ENCODE measurements at regions of chr1 and their contacts with region 1.

Region 1: DNA sequence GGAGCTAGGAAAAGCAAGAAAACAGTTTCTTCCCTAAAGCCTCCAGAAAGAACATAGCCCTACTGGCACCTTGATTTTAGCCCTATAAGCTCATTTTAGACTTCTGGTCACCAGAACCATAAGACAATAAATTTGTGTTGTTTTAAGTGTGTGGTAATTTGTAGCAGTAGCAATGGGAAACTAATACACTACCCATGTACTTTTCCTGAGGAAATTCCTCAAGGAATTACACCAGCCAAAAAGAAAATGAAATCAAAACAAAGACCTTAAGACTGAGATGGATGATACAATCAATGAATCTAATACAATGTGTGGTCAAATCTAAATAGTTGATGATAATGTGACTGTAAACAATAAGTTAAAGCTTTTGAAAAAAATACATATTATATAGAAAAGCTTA is 11.8 kb downstream of the VAMP4 start:
- DNase-seq: no peak
- H3K4me3 ChIP-seq: no peak overlapping the region
- H3K4me3 Mint-ChIP-seq: no peak overlapping the region
- H3K27ac ChIP-seq: no peak overlapping the region
- H3K27ac Mint-ChIP-seq: no peak overlapping the region
- H3K4me1 ChIP-seq: no peaks in the 10 kb centered on the region
- H3K4me1 Mint-ChIP-seq: peaks cover 4% of the 10 kb centered on the region
- H3K27me3 ChIP-seq: no peaks in the 10 kb centered on the region
- H3K27me3 Mint-ChIP-seq: no peaks in the 10 kb centered on the region
- CTCF ChIP-seq: no peak

Region 2: GRCh38 chr1:171715813-171716251 is 14.2 kb before region 1 on chr1:
- intact Hi-C with region 1: no loop called
- DNase-seq: no peak
- H3K4me3 ChIP-seq: no peak overlapping the region
- H3K4me3 Mint-ChIP-seq: no peak overlapping the region
- H3K27ac ChIP-seq: no peak overlapping the region
- H3K27ac Mint-ChIP-seq: peak overlapping the region in 1 of 7 donors; percentile 15
- H3K4me1 ChIP-seq: no peaks in the 10 kb centered on the region
- H3K4me1 Mint-ChIP-seq: peaks cover 2% of the 10 kb centered on the region
- H3K27me3 ChIP-seq: no peaks in the 10 kb centered on the region
- H3K27me3 Mint-ChIP-seq: no peaks in the 10 kb centered on the region
- CTCF ChIP-seq: peak; percentile 36

Region 3: DNA sequence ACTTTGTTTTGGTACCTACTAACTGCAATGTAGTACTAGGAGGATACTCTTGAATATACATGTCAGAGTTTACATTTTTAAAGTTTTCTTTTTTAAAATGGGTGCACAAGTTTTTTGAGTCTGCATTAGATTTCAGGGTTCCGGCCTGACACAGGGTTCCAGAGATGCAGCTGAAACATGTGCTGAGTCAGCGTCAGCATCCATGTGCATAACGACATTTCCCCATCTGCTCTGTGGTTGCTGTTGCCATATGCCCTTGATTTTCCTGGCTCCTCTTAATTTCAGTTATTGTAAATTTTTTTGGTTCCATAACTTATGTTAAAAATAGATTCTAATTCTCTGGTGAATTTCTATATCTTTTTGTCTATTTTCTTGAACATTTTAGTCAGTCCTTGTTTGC is 39.1 kb after region 1 on chr1:
- intact Hi-C with region 1: no loop called
- DNase-seq: peak in 1 of 3 donors; percentile 14
- H3K4me3 ChIP-seq: no peak overlapping the region
- H3K4me3 Mint-ChIP-seq: no peak overlapping the region
- H3K27ac ChIP-seq: no peak overlapping the region
- H3K27ac Mint-ChIP-seq: no peak overlapping the region
- H3K4me1 ChIP-seq: peaks cover 32 to 40% of the 10 kb centered on the region in 2 donors
- H3K4me1 Mint-ChIP-seq: peaks cover 43% of the 10 kb centered on the region
- H3K27me3 ChIP-seq: no peaks in the 10 kb centered on the region
- H3K27me3 Mint-ChIP-seq: no peaks in the 10 kb centered on the region
- CTCF ChIP-seq: no peak

Region 4: GRCh38 chr1:171788696-171789095 is 58.6 kb after region 1 on chr1:
- intact Hi-C with region 1: loop called in 1 of 2 experiments (anchors 2 kb)
- DNase-seq: no peak
- H3K4me3 ChIP-seq: no peak overlapping the region
- H3K4me3 Mint-ChIP-seq: no peak overlapping the region
- H3K27ac ChIP-seq: no peak overlapping the region
- H3K27ac Mint-ChIP-seq: peak overlapping the region in 1 of 7 donors; percentile 32
- H3K4me1 ChIP-seq: peaks cover 0 to 5% of the 10 kb centered on the region in 2 donors
- H3K4me1 Mint-ChIP-seq: peaks cover 15% of the 10 kb centered on the region
- H3K27me3 ChIP-seq: no peaks in the 10 kb centered on the region
- H3K27me3 Mint-ChIP-seq: peaks cover 0 to 2% (median 0%) of the 10 kb centered on the region in 3 donors
- CTCF ChIP-seq: no peak

Region 5: DNA sequence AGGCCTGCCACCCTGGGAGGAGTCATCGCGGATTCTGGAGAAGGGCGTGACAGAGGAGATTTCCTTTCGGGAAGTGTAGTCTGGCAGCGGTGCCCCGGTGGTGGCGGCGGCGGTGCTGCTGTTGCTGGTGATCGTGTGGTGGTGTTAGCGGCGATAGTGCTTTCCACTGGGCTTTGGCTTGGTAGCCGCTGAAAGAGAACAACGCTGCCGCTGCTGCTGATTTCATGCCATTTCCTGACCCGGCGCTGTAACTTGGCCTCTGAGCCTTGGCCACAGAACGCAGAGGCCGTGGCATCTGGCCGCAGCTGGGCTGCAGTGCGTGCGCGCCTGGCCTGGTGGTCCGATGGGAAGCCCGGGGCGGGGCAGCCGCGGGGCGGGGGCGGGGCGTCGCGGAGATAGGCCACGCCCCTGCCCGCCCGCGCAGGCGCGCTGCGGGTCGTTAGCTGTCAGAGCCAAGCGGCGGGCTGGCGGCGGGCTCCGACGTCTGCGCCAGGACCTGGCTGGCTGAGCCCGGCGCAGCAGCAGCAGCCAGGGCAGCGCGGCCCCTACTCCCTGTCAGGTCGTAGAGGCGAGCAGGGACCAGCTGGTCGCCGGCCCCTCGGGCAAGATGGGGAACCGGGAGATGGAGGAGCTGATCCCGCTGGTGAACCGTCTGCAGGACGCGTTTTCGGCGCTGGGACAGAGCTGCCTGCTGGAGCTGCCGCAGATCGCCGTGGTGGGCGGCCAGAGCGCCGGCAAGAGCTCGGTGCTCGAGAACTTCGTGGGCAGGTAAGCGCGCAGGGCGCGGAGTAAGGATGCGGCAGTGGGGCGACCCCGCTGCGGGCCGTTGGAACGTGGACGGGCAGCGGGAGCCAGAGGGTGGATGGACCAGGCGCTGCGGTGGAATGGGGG is 111.2 kb after region 1 on chr1 and contains the start of gene DNM3:
- intact Hi-C with region 1: no loop called
- DNase-seq: peak; percentile 53 to 70 (median 70)
- H3K4me3 ChIP-seq: peak within 1 kb of the TSS; percentile 78 to 86 (median 81)
- H3K4me3 Mint-ChIP-seq: peak within 1 kb of the TSS; percentile 90 to 94
- H3K27ac ChIP-seq: no peak within 1 kb of the TSS
- H3K27ac Mint-ChIP-seq: peak within 1 kb of the TSS in 5 of 7 donors; percentile 64 to 77 (median 66)
- H3K4me1 ChIP-seq: peaks cover 18 to 24% of the 10 kb centered on the region in 2 donors
- H3K4me1 Mint-ChIP-seq: peaks cover 20% of the 10 kb centered on the region
- H3K27me3 ChIP-seq: peaks cover 10 to 23% of the 10 kb centered on the region in 2 donors
- H3K27me3 Mint-ChIP-seq: peaks cover 12 to 24% (median 14%) of the 10 kb centered on the region in 3 donors
- CTCF ChIP-seq: no peak
- polyA plus RNA-seq, gene DNM3: 0.15 TPM in 1 of 3 donors, not detected in the others